Head of caudate nucleus (tissue), 42 donors: ENCODE measurements at regions of chr2 and their contacts with region 1.

Region 1: GRCh38 chr2:13006829-13007717 is 290.3 kb downstream of the TRIB2 start:
- DNase-seq: peak; percentile 22 to 87 (median 68)

Region 2: DNA sequence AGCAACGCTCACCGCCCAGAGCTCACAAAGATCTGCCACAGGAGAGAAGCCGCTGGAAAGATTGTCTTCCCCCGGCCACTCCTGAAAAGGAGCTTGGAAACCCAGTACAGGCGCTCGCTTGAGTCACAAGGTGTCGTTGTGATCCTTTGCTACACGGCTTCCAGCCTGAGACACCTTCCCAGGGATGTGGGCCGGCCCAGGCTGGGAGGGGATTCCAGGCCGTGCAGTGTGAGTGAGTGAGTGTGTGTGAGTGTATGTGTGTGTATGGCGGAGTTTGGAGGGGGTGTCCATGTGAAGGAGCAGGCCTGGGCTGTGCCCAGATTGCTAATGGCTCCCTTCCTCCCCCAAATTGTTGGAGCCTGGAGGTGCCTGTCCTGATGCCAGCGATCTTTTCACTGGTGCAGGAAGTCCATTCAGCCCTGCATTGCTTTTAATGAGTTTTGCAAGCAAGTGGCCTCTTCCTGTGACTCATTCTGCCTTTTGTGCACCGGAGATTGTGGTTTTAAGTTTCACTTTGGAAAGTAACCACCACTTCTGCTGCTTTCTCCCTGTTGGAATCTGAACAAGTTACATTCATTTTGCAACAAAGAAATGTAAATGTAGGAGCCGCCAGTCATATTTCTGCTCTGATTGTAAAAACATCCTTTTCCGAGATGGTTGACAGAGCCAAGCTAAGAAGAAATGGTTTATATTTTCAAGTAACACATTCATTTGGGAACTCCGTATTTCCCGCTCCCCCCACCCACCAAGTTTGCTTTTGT is 1176.9 kb before region 1 on chr2:
- intact Hi-C with region 1: loop called (anchors 10 kb)
- DNase-seq: peak; percentile 42 to 92 (median 76)

Region 3: DNA sequence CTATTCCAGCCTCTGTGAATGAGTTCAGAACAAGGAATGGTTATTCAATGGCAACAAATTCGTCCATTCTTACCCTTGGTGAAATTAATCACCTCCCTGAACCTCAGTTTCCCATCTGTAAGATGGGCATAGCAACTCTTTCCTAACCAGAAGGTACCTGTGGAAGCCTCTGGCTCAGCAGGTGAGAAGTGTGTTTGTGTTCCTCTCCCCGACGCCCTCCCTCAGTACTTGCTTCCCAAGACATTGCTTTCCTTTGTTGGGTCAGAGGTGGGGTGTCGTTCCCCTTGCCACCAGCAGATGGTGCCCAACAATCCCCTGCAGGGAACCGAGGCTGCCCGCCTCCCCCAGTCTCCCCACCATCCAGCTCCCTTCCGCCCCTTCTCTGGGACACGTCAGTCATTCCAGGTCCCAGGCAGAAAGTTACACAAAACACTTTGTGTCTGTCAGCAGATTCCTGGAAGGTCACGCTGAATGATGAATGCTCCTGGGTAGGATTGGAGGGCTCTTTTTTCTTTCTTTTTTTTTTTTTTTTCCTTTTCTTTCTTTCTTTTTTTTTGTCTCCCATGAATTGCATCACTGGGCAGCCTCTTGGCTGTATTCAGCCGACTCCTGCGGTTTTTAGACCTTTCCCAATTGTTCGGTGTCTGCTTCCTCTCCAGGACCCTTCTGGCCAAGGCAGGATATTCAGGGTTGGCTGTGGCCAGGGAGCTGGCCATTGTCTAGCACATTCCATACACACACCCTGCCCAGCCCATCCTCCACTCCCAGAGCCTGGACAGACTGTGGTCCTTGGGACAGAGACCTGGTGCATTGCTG is 1143.4 kb before region 1 on chr2:
- intact Hi-C with region 1: loop called (anchors 10 kb)
- DNase-seq: peak; percentile 68 to 93 (median 83)

Region 4: GRCh38 chr2:12948961-12949353 is 58.1 kb before region 1 on chr2:
- intact Hi-C with region 1: no loop called
- DNase-seq: no peak

Region 5: DNA sequence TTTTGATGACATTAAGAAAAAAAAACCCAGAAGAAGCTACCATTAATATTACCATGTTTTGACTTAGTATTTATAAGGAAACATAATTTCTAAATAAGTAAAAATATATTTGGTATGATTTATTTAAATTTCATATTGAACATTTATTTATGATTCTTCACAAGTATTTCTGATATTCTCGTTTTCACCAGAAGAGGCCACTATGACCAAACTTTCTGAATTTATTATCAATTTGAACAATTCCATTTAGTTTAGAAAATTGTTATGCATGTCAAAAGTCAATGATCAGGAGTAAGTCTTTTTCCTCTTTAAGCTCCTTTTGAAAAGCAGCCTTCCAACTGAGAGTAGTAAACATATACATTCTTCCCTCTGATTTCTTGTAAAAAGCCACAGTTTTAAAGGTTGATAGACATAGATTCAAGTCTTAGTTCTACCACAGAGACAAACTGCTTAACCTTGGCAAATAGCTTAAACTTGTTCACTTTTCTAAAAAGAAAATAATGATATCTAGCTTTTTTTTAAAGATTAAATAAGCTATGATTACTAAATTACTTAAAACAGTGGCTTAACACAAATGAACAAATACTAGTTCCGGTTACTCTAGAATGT is 39.6 kb after region 1 on chr2:
- intact Hi-C with region 1: no loop called
- DNase-seq: no peak